Panc1 (cell line): ENCODE measurements at regions of chr4 and their contacts with region 1.

Region 1: GRCh38 chr4:48578132-48578968 is 88.3 kb downstream of the ZAR1 start:
- DNase-seq: peak; percentile 42
- ATAC-seq: peak; percentile 88
- H3K4me3 ChIP-seq: no peak overlapping the region
- H3K27ac ChIP-seq: no peak overlapping the region
- H3K4me1 ChIP-seq: no peaks in the 10 kb centered on the region
- H3K27me3 ChIP-seq: no peaks in the 10 kb centered on the region
- CTCF ChIP-seq: peak; percentile 74

Region 2: GRCh38 chr4:48153791-48154550 is 424.4 kb before region 1 on chr4:
- CTCF ChIA-PET with region 1: no interaction called
- POLR2A ChIA-PET with region 1: no interaction called
- in situ Hi-C with region 1: no loop called
- intact Hi-C with region 1: no loop called
- DNase-seq: no peak
- ATAC-seq: no peak
- H3K4me3 ChIP-seq: no peak overlapping the region
- H3K27ac ChIP-seq: no peak overlapping the region
- H3K4me1 ChIP-seq: no peaks in the 10 kb centered on the region
- H3K27me3 ChIP-seq: no peaks in the 10 kb centered on the region
- CTCF ChIP-seq: no peak

Region 3: DNA sequence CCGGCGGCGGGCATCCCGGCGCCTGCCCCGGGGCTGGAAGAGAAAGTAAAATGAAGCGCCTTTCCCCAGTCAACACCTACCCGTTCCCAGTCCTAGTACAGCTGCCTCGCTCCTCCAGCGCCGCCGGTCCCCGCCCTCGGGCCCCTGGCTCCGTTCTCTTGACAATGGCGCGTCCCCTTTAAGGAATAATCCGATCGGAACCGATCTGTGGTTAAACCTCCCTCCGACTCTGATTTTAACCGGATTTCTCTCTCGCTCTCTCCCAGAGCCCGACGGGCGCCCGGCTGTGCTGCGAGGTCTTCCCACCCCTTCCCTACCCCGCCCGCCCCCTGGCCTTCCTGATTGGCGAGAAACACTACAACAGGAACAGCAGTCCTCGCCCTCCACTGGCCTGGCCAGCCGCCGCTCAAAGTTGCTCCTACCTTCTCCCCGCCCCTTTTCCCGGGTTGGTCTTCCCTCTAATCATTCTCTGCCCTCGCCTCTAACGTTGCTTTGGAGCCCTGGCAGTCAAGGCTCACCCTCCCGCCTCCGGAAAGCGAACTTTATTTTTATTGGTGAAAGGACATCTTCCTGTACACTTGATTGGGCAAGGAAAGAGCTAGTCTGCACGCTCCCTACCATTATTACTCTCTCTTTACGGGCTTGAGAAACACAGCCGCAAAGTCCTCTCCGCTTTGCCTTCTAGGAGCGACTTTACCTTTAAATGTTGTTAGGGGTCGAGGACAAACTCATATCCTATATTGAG is 201.8 kb after region 1 on chr4 and contains the start of gene FRYL:
- CTCF ChIA-PET with region 1: no interaction called
- POLR2A ChIA-PET with region 1: no interaction called
- in situ Hi-C with region 1: no loop called
- intact Hi-C with region 1: loop called (anchors 5 kb)
- DNase-seq: peak; percentile 96
- ATAC-seq: peak; percentile 94
- H3K4me3 ChIP-seq: peak within 1 kb of the TSS; percentile 80 to 89
- H3K27ac ChIP-seq: peak within 1 kb of the TSS; percentile 92
- H3K4me1 ChIP-seq: peaks cover 22% of the 10 kb centered on the region
- H3K27me3 ChIP-seq: no peaks in the 10 kb centered on the region
- CTCF ChIP-seq: no peak
- total RNA-seq, gene FRYL: 47.5 TPM

Region 4: DNA sequence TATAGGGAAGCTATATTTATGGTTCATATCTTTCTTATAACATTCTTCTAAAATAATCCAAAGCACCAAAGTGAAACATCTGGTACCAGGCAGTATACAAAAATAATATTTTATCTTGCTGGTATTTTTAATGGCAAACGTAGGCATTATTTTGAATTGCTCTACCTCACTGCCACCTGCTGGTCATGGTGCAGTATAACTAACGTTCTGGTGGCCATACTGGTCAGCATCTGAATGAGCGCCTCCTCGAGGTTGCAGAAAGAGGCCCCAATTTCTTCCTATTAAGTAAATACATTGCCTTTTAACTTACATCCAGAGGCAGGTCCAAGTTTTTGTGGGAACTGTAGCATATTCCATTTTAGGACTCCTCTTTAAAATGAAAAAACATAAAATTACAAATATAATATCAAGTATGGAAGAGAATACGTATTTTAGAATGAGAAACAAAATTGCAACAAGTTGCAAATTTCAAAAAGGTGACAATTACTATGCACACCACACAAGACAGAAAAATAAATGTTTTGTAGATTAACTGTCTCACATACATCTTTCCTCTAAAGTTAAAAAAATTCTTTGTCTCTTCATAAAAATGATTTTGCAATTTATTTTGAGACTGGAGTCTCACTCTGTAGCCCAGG is 384.8 kb after region 1 on chr4:
- CTCF ChIA-PET with region 1: interaction called, 4 read pairs
- POLR2A ChIA-PET with region 1: no interaction called
- in situ Hi-C with region 1: no loop called
- intact Hi-C with region 1: loop called (anchors 10 kb)
- DNase-seq: peak; percentile 70
- ATAC-seq: peak; percentile 84
- H3K4me3 ChIP-seq: no peak overlapping the region
- H3K27ac ChIP-seq: no peak overlapping the region
- H3K4me1 ChIP-seq: no peaks in the 10 kb centered on the region
- H3K27me3 ChIP-seq: no peaks in the 10 kb centered on the region
- CTCF ChIP-seq: peak; percentile 95